Head of caudate nucleus (tissue), 42 donors: ENCODE measurements at regions of chr14 and their contacts with region 1.

Region 1: GRCh38 chr14:76710056-76711010 is 50.9 kb upstream of the VASH1 start:
- DNase-seq: peak in 21 of 42 donors; percentile 23 to 82 (median 49)

Region 2: DNA sequence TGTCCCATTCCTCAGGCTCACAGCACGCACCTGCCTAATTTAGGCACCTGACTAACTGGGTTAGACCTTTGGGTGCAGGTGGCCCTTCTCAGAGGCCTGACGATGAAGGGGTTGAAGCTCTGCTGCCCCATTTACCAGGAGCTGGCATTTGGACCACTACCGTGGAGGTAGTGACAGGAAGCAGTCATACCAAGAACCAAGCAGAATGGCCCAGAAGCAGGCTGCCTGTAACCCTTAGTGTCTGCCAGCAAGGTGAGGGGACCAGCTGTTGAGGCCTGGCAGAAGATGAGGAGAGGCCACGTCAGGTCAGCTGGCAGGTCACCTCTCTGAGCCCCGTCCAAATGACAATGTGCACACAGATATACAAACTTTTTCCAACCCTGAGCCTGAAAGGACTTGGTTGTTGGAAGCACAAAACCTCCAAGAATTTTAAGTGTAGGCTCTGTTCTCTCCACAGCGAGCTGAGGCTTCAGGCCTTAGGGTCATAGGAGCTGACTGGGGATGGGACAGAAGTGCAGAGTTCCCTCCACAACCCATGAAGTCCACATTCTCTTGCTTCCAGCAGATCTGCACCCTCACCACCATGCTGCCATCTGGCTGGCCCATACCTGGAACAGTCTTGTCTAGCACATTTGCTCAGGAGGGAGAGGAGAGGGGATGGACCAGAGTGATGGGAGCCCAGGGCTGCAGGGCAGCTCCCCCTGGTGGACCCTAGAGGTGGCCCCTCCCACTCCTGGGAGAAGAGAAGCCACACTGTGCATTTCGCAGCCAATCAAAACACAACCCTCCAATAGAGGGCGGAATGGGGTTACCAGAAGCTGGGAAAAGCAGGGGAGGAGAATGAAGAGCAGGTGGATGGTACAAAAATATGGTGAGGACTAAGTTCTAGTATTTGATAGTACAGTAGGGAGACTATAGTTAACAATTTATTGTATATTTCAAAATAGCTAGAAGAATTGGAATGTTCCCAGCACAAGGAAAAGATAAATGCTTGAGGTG is 74.2 kb after region 1 on chr14:
- intact Hi-C with region 1: loop called (anchors 1 kb)
- DNase-seq: peak; percentile 67 to 94 (median 86)

Region 3: GRCh38 chr14:77098529-77099353 is 388.4 kb after region 1 on chr14:
- intact Hi-C with region 1: no loop called
- DNase-seq: peak; percentile 49 to 91 (median 76)